CD14-positive monocyte (primary cell): ENCODE measurements at regions of chrX and their contacts with region 1.

Region 1: DNA sequence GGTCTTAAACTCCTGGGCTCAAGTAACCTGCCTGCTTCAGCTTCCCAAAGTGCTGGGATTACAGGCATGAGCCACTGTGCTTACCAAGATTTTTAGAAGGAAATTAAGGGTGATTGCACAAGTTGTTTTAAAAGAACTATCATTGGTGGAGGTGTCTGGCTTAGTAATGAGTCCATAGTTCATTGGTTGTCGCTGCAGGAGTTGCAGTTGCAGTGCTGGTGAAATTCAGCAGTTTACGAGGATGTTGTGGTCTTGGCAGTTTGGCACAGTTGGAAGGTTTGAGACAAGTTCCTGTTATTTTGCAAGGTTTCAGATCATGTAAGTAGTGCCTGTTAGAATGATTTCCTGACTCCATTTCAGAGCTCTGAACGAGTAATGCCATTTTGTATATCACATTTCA is 48.1 kb downstream of the RAB40AL start:
- DNase-seq: peak; percentile 17 to 51 (median 45)
- H3K4me3 ChIP-seq: no peak overlapping the region
- H3K4me3 Mint-ChIP-seq: peak overlapping the region in 1 of 2 donors; percentile 7
- H3K27ac ChIP-seq: no peak overlapping the region
- H3K27ac Mint-ChIP-seq: peak overlapping the region in 5 of 7 donors; percentile 46 to 79 (median 75)
- H3K4me1 ChIP-seq: peaks cover 0 to 14% of the 10 kb centered on the region in 2 donors
- H3K4me1 Mint-ChIP-seq: peaks cover 20% of the 10 kb centered on the region
- H3K27me3 ChIP-seq: no peaks in the 10 kb centered on the region
- H3K27me3 Mint-ChIP-seq: peaks cover 0 to 1% (median 0%) of the 10 kb centered on the region in 3 donors
- CTCF ChIP-seq: no peak

Region 2: DNA sequence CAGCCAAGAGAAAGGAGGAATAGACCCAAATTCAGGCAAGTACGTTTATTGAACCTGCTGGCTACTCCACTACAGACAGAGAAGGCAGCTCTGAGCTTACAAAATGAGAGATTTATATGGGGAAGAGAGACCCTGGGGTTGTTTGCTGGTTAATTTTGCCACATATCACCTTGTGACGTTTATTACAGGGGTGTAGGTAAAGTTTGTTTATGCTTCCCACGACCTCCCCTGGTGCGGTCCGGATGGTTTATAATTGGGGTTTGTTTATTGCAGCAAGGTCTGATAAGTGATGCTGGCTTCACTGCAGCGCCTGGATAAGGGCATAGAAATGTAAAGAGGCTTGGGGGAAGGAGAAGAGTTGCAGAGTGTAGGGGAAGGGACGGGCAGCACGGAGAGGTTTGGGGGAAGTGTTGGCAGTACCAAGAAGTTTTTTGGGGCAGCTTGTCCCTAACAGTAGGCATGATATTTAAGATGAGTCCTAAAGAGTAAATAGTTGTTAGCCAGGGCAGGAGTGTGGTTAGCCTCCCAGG is 66.1 kb after region 1 on chrX:
- intact Hi-C with region 1: loop called in 1 of 2 experiments (anchors 10 kb)
- DNase-seq: no peak
- H3K4me3 ChIP-seq: no peak overlapping the region
- H3K4me3 Mint-ChIP-seq: no peak overlapping the region
- H3K27ac ChIP-seq: no peak overlapping the region
- H3K27ac Mint-ChIP-seq: no peak overlapping the region
- H3K4me1 ChIP-seq: no peaks in the 10 kb centered on the region
- H3K4me1 Mint-ChIP-seq: no peaks in the 10 kb centered on the region
- H3K27me3 ChIP-seq: no peaks in the 10 kb centered on the region
- H3K27me3 Mint-ChIP-seq: peaks cover 0 to 5% (median 4%) of the 10 kb centered on the region in 3 donors
- CTCF ChIP-seq: no peak

Region 3: GRCh38 chrX:103092942-103093341 is 107.8 kb after region 1 on chrX and contains the start of gene NXF3:
- intact Hi-C with region 1: no loop called
- DNase-seq: peak in 2 of 3 donors; percentile 0 to 6
- H3K4me3 ChIP-seq: no peak within 1 kb of the TSS
- H3K4me3 Mint-ChIP-seq: peak within 1 kb of the TSS in 1 of 2 donors; percentile 71
- H3K27ac ChIP-seq: no peak within 1 kb of the TSS
- H3K27ac Mint-ChIP-seq: peak within 1 kb of the TSS in 1 of 7 donors; percentile 58
- H3K4me1 ChIP-seq: peaks cover 0 to 8% of the 10 kb centered on the region in 2 donors
- H3K4me1 Mint-ChIP-seq: peaks cover 2% of the 10 kb centered on the region
- H3K27me3 ChIP-seq: no peaks in the 10 kb centered on the region
- H3K27me3 Mint-ChIP-seq: peaks cover 0 to 1% (median 0%) of the 10 kb centered on the region in 3 donors
- CTCF ChIP-seq: no peak
- polyA plus RNA-seq, gene NXF3: not detected

Region 4: GRCh38 chrX:104113222-104113965 is 1128.2 kb after region 1 on chrX:
- intact Hi-C with region 1: no loop called
- DNase-seq: peak in 1 of 3 donors; percentile 6
- H3K4me3 ChIP-seq: peak overlapping the region in 1 of 3 experiments; percentile 66
- H3K4me3 Mint-ChIP-seq: peak overlapping the region; percentile 76 to 87
- H3K27ac ChIP-seq: no peak overlapping the region
- H3K27ac Mint-ChIP-seq: no peak overlapping the region
- H3K4me1 ChIP-seq: peaks cover 8% of the 10 kb centered on the region in 2 donors
- H3K4me1 Mint-ChIP-seq: peaks cover 11% of the 10 kb centered on the region
- H3K27me3 ChIP-seq: peaks cover 19 to 31% of the 10 kb centered on the region in 2 donors
- H3K27me3 Mint-ChIP-seq: peaks cover 21 to 40% (median 24%) of the 10 kb centered on the region in 3 donors
- CTCF ChIP-seq: peak; percentile 29